Aorta (tissue), 5 donors: ENCODE measurements at regions of chr6 and their contacts with region 1.

Region 1: DNA sequence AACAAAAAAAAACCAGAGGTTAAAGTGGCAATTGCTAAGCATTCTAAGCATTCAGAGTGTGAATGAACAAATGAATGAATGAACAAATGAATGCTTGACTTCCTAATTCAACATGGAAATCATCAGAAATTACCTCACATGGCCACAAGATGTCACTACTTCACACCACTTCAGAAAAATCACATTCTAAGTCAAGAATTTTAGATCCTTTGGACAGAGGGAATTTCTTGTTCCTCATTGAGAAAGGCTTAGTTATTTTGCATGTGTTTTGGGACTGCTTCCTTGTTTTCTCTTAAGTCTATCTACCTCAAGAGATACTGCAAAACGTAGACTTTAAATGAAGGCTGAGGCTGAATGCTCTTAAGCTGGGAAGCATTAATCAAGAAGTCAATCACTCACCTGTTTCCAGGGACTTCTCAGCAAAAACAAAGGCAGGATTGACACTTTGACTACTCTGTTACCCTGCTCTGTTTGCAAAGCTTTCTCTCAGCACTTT is 120.2 kb downstream of the MBOAT1 start:
- DNase-seq: no peak
- ATAC-seq: peak; percentile 65
- H3K4me3 ChIP-seq: no peak overlapping the region
- H3K27ac ChIP-seq: no peak overlapping the region
- H3K4me1 ChIP-seq: no peaks in the 10 kb centered on the region
- H3K27me3 ChIP-seq: no peaks in the 10 kb centered on the region

Region 2: GRCh38 chr6:20056350-20056992 is 35.6 kb before region 1 on chr6:
- intact Hi-C with region 1: no loop called
- DNase-seq: no peak
- ATAC-seq: no peak
- H3K4me3 ChIP-seq: no peak overlapping the region
- H3K27ac ChIP-seq: no peak overlapping the region
- H3K4me1 ChIP-seq: no peaks in the 10 kb centered on the region
- H3K27me3 ChIP-seq: no peaks in the 10 kb centered on the region

Region 3: GRCh38 chr6:20126789-20127653 is 34.9 kb after region 1 on chr6:
- intact Hi-C with region 1: loop called (anchors 2 kb)
- DNase-seq: peak; percentile 78 to 90
- ATAC-seq: peak; percentile 89
- H3K4me3 ChIP-seq: no peak overlapping the region
- H3K27ac ChIP-seq: no peak overlapping the region
- H3K4me1 ChIP-seq: peaks cover 2 to 3% of the 10 kb centered on the region in 2 donors
- H3K27me3 ChIP-seq: no peaks in the 10 kb centered on the region